Activated T-helper 2 cell treated with anti-CD3 and anti-CD28 coated beads, Interferon-gamma antibody, Interleukin-2, Interleukin-4, amounts not matched to agents 10 μg/mL and 5 μg/mL and 100 μg/mL, durations not matched to agents 14 hours and 24 hours and 36 hours (primary cell): ENCODE measurements at regions of chr16 and their contacts with region 1.

Region 1: GRCh38 chr16:67521095-67521804 is 7.4 kb upstream of the RIPOR1 start:
- DNase-seq: peak; percentile 94
- H3K4me3 Mint-ChIP-seq: peak overlapping the region; percentile 85
- H3K27ac Mint-ChIP-seq: peak overlapping the region; percentile 98
- H3K4me1 Mint-ChIP-seq: peaks cover 18% of the 10 kb centered on the region
- H3K27me3 Mint-ChIP-seq: peaks cover 5% of the 10 kb centered on the region

Region 2: DNA sequence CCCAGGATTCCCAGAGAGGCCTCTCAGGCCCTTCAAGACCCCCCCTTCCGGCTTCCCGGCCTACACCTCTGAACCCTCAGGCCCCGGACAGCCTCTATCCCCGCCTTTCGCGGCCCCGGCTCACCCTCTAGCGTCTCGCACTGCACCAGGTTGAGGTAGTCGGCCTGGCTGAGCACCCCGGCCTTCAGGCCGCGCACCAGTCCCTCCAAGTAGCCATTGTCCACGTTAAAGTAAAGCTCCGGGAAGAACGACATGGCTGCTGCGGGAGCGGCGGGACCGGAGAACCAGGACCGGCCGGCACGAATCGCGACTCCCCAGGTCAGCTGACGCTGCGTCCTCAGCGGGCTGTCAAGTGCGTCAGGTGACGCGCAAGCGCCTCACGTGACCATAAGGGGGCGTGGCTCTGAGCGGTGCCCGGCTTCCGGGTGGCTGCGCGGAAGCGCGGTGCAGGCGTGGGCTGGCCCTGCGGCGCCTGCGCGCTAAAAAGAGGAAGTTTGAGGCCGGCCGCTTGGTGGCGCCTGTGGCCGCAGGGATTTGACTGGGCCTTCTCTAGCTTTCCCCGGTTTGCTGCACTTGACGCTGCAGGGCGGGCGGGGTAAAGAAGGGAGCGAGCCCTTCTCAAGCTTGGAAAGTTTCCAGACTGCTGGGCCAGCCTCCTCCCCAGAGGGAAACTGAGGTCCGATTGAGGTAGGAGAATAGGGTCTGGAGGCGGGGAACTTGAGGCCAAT is 40.3 kb before region 1 on chr16 and contains the start of gene ATP6V0D1:
- intact Hi-C with region 1: loop called (anchors 5 kb)
- DNase-seq: peak; percentile 99
- H3K4me3 Mint-ChIP-seq: peak within 1 kb of the TSS; percentile 99
- H3K27ac Mint-ChIP-seq: peak within 1 kb of the TSS; percentile 98
- H3K4me1 Mint-ChIP-seq: peaks cover 23% of the 10 kb centered on the region
- H3K27me3 Mint-ChIP-seq: no peaks in the 10 kb centered on the region
- total RNA-seq, gene ATP6V0D1: 31.5 and 33.9 TPM in 2 replicates

Region 3: DNA sequence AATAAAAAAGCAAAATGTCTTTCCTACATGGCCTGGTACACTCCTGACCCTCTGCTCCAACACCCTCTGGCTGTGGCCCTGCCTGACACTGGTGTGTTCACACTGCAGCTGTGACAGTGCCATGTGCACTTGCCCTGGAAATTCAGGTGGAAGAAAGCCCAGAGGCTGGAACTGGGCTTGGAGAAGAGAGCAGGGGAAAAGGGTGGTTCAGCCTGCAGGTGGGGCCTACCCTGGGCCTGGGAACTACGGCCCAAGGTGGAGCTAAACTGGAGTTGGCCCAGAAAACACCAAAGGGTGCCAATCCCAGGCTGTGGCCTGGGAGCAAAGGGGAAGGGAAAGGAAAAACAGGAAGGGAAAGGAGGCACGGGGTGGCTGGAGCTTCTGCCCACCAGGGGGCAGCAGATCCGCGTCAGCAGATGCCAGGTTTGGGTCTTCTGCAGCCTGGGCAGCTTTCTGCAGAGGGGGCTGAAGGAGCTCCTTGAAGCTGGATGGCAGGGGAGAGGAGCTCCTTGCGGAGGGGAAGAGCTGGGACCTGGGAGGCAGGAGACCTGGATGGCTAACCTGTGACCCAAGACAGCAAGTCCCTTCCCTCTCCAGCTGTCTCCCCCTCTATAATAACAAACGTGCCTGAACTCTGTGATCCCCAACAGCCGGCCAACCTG is 25.6 kb after region 1 on chr16:
- intact Hi-C with region 1: loop called (anchors 2 kb)
- DNase-seq: peak; percentile 62
- H3K4me3 Mint-ChIP-seq: peak overlapping the region; percentile 13
- H3K27ac Mint-ChIP-seq: peak overlapping the region; percentile 81
- H3K4me1 Mint-ChIP-seq: peaks cover 28% of the 10 kb centered on the region
- H3K27me3 Mint-ChIP-seq: no peaks in the 10 kb centered on the region

Region 4: DNA sequence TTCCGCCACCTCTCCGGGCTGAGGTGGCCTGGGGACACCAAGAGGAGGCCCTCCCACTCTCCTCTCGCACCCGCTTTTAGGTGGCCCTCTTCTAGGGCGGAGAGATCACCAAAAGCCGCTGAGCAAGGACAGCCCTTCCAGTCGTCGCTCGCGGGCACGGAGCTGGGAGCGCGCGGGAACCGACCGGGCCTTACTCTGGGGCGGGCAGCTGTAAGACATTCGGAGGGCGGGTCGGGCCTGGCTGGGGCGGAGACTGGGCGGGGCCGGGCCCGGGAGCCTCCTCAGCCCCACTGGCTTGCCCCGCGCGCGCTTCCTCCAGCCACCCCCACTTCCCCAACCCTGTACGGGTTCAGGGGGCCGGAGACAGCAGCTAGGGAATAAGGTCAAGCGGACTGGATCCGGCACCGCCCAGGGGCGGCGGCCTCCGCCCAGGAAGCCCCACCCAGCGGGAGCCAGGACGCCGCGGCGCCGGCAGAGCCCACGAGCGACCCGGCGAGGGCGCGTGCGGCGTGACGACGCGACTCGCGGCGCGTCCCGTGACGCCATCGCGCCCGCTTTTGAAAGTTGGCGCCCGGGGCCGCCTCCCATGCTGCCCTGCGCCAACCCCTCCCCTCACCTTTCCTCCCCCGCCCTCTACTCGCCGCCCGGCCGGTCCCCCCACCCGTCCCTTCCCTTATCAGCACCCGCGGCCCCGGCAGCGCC is 40.7 kb after region 1 on chr16:
- intact Hi-C with region 1: loop called (anchors 1 kb)
- DNase-seq: peak; percentile 99
- H3K4me3 Mint-ChIP-seq: peak overlapping the region; percentile 83
- H3K27ac Mint-ChIP-seq: peak overlapping the region; percentile 90
- H3K4me1 Mint-ChIP-seq: peaks cover 32% of the 10 kb centered on the region
- H3K27me3 Mint-ChIP-seq: no peaks in the 10 kb centered on the region

Region 5: GRCh38 chr16:67641779-67642708 is 120.8 kb after region 1 on chr16:
- intact Hi-C with region 1: loop called (anchors 1 kb)
- DNase-seq: no peak
- H3K4me3 Mint-ChIP-seq: no peak overlapping the region
- H3K27ac Mint-ChIP-seq: no peak overlapping the region
- H3K4me1 Mint-ChIP-seq: peaks cover 6% of the 10 kb centered on the region
- H3K27me3 Mint-ChIP-seq: no peaks in the 10 kb centered on the region

Region 6: GRCh38 chr16:67667817-67668494 is 146.7 kb after region 1 on chr16:
- intact Hi-C with region 1: loop called (anchors 1 kb)
- DNase-seq: peak; percentile 80
- H3K4me3 Mint-ChIP-seq: peak overlapping the region; percentile 86
- H3K27ac Mint-ChIP-seq: no peak overlapping the region
- H3K4me1 Mint-ChIP-seq: peaks cover 13% of the 10 kb centered on the region
- H3K27me3 Mint-ChIP-seq: no peaks in the 10 kb centered on the region

Region 7: GRCh38 chr16:67841764-67842508 is 320.7 kb after region 1 on chr16 and contains the start of gene THAP11:
- intact Hi-C with region 1: loop called (anchors 1 kb)
- DNase-seq: peak; percentile 92
- H3K4me3 Mint-ChIP-seq: peak within 1 kb of the TSS; percentile 89
- H3K27ac Mint-ChIP-seq: peak within 1 kb of the TSS; percentile 94
- H3K4me1 Mint-ChIP-seq: peaks cover 29% of the 10 kb centered on the region
- H3K27me3 Mint-ChIP-seq: no peaks in the 10 kb centered on the region
- total RNA-seq, gene THAP11: 43.0 and 45.1 TPM in 2 replicates